ENCODE measurements at regions of chr18 and their contacts with region 1.

Region 1: DNA sequence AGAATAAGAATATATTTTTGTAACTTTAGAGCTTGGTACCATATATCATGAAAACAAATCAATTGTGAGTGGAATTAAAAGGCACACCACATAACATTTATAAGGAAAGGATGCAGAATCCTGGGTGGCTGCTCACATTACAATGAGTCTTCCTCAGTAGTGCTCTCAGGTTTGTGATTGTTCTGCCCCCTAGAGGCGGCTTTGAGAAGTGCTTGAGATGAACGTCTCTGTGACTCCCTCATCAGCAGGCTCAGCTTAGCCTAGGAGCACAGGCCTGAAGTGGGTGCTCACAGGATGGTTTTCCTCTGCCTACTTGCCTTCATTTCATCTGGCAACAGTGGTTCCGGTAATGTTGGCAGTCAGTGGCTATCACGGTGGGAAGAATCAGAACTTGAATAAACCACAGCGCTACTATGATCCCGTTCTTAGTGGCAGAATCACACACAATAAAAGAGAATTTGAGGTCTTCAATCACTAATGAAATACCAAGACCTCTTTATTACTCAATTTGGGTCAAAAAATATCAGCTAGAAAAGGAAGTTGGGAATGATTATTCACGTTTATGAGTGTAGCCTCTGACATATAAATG is 38.1 kb upstream of the B4GALT6 start:
- DNase-seq: peak; percentile 9
- H3K4me3 ChIP-seq: no peak overlapping the region
- H3K27me3 ChIP-seq: peaks cover 9% of the 10 kb centered on the region
- CTCF ChIP-seq: peak; percentile 89

Region 2: DNA sequence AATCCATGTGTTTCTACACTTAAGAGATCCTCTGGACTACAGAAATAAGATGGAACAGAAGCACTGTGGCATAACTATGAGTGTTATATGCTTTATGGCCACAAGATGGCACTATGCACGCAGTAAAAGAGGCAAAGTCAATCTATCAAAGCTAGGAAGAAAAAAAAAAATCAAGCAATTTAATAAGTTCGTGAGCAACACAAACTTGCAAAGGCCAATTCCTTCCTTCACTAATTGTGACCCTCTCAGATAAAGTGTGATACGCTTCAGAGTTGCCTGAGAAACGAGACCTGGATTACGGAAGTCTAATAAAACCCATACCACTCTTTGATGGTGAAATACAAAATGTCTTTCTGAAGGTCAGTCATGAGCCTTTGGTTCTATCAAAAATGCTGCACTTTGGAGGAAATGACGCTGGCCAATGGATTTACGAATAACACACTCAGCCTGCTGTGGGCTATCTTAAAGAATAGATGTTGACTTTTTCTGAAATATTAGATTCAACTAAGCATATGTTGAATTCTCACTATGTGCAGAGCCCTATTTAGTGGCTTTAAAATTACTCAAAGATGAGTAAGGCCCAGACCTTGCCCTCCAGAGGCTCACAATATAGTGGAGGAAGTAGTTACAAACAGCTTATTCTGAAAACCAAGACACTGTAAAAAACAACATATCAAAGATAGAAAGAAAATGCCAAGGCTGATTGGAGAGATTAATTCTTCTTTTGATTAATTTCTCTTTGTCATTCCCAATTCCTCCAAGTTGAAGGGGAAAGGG is 166.3 kb before region 1 on chr18:
- CTCF ChIA-PET with region 1: interaction called, 41 read pairs
- POLR2A ChIA-PET with region 1: no interaction called
- DNase-seq: peak; percentile 26
- H3K4me3 ChIP-seq: no peak overlapping the region
- H3K27me3 ChIP-seq: no peaks in the 10 kb centered on the region
- CTCF ChIP-seq: peak; percentile 69

Region 3: DNA sequence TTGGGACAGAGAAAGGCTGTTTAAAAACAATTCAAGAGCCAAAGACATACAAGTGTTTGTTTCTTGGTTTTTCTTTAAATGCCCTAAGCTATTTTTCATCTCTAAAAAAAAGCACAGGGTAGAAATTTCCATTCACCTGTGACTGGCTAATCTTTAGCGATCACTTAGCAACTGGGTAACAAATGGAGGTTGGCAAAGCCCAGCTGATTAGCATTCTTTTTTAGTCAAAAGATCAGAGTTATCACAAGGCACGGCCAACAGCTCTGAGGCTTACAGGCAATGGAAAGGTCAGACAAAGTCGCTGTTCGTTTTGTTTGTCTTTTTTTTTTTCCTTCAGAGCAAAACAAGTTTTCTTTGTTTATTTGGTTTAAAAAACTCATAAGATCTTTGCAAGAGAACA is 159.7 kb before region 1 on chr18:
- CTCF ChIA-PET with region 1: interaction called, 41 read pairs
- POLR2A ChIA-PET with region 1: no interaction called
- DNase-seq: no peak
- H3K4me3 ChIP-seq: no peak overlapping the region
- H3K27me3 ChIP-seq: no peaks in the 10 kb centered on the region
- CTCF ChIP-seq: no peak

Region 4: DNA sequence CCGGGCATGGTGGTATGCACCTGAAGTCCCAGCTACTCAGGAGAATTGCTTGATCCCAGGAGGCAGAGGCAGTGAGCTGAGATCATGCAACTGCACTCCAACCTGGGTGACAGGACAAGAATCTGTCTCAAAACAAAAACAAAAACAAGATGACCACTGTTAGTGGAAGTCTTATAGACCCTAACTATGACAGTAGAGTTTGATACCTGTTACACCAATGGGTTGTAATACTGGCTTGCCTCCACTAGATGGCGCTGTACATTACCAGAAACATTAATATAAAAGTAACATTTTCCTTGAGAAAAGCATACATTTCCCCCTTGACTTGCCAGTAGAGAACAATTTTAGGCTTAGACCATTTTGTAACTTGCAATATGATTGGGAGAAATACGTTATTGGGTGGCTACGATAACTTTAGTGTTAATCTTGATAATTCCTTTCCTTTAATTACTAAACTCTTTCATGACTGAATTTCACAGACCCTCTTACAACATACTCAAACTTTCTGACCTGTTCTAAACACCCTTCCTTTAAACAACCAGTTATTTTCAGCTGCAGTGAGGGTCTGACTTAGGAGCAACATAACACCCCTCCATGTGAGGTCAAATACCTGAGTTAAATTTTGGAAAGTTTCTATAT is 18.8 kb after region 1 on chr18:
- CTCF ChIA-PET with region 1: interaction called, 13 read pairs
- POLR2A ChIA-PET with region 1: no interaction called
- DNase-seq: no peak
- H3K4me3 ChIP-seq: no peak overlapping the region
- H3K27me3 ChIP-seq: no peaks in the 10 kb centered on the region
- CTCF ChIP-seq: peak; percentile 73

Region 5: GRCh38 chr18:31901063-31901462 is 178.6 kb after region 1 on chr18:
- CTCF ChIA-PET with region 1: no interaction called
- POLR2A ChIA-PET with region 1: no interaction called
- DNase-seq: no peak
- H3K4me3 ChIP-seq: no peak overlapping the region
- H3K27me3 ChIP-seq: no peaks in the 10 kb centered on the region
- CTCF ChIP-seq: no peak

Measured in BJ (cell line).